ENCODE measurements at regions of chr5 and their contacts with region 1.

Region 1: DNA sequence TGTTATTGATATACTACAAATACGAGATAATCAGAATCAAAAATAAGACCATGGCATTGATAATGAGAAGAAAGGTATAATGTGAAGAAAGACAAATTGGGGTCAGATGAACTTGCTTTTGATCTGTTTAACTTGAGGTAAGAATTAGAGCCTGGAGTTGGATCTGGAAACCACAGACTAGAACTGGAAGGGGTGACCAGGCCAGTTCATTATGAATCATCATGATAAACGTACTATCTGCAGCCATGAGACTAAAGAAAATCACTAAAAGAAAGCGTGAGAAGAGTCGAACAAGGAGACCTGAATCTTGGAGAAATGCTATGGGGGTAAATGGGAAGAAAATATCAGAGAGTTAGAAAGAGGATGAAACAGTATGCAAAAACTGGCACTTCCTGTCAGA is 967.5 kb downstream of the NR2F1-AS1 start:
- DNase-seq: no peak
- ATAC-seq: no peak

Region 2: GRCh38 chr5:91456928-91457680 is 1156.4 kb before region 1 on chr5:
- intact Hi-C with region 1: loop called (anchors 10 kb)
- DNase-seq: no peak
- ATAC-seq: no peak

Region 3: GRCh38 chr5:92484484-92484883 is 129.1 kb before region 1 on chr5:
- intact Hi-C with region 1: no loop called
- DNase-seq: no peak
- ATAC-seq: no peak

Region 4: DNA sequence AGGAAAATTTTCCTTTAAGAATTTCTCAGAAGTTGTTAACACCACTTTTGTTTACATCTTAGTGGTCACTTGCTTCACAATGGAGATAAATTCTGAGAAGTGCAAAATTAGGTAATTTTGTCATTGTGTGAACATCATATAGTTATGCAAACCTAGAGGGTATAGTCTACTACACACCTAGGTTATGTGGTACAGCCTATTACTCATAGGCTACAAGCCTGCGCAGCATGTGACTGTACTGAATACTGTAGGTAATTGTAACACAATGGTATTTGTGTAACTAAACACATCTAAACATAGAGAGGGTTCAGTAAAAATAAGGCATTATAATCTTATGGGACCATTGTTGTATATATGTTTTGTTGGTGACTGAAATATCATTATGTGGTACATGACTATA is 1516.5 kb after region 1 on chr5:
- intact Hi-C with region 1: no loop called
- DNase-seq: no peak
- ATAC-seq: no peak